Aorta (tissue), 5 donors: ENCODE measurements at regions of chr6 and their contacts with region 1.

Region 1: GRCh38 chr6:84166395-84166794 is 61.0 kb downstream of the CEP162 start:
- DNase-seq: no peak
- ATAC-seq: no peak
- H3K4me3 ChIP-seq: no peak overlapping the region
- H3K27ac ChIP-seq: no peak overlapping the region
- H3K4me1 ChIP-seq: no peaks in the 10 kb centered on the region
- H3K27me3 ChIP-seq: no peaks in the 10 kb centered on the region

Region 2: GRCh38 chr6:84093441-84094435 is 72.7 kb before region 1 on chr6:
- intact Hi-C with region 1: loop called in 1 of 2 experiments (anchors 10 kb)
- DNase-seq: no peak
- ATAC-seq: no peak
- H3K4me3 ChIP-seq: no peak overlapping the region
- H3K27ac ChIP-seq: peak overlapping the region; percentile 64 to 76
- H3K4me1 ChIP-seq: peaks cover 4 to 10% of the 10 kb centered on the region in 2 donors
- H3K27me3 ChIP-seq: no peaks in the 10 kb centered on the region